ENCODE measurements at regions of chr1 and their contacts with region 1.

Region 1: GRCh38 chr1:110495926-110496600 is 22.9 kb downstream of the KCNA10 start:
- H3K4me3 ChIP-seq: no peak overlapping the region
- H3K27ac ChIP-seq: no peak overlapping the region
- H3K4me1 ChIP-seq: no peaks in the 10 kb centered on the region
- CTCF ChIP-seq: peak; percentile 87

Region 2: GRCh38 chr1:110053557-110054428 is 442.3 kb before region 1 on chr1:
- CTCF ChIA-PET with region 1: interaction called, 14 read pairs
- POLR2A ChIA-PET with region 1: no interaction called
- H3K4me3 ChIP-seq: no peak overlapping the region
- H3K27ac ChIP-seq: no peak overlapping the region
- H3K4me1 ChIP-seq: no peaks in the 10 kb centered on the region
- CTCF ChIP-seq: peak; percentile 92

Region 3: DNA sequence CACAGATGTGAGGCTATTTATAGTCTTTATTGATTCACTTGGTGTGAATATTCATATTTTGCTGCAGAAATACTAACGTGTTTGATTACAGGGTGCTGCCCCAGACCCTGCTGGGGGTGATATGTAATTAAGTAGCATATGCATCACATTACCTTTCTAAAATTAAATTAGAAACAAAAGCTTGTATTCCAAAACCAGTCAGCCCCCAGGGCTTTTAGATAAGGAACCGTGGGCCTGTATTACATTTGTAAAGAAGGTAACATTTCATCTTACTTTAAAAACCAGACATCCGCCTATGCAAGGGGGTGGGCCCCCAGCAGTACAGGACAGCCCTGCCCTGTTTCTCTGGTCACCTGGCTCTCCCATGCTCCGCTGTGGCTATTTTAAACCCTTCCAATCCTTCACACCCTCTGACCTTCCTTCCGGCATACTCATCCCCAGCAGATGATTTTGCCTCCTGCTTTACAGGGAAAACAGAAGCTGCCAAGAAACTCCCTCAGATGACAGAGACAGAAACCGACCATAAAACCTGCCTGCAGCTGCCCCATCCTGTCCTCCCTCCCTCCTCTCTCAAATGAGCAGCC is 307.9 kb before region 1 on chr1:
- CTCF ChIA-PET with region 1: interaction called, 10 read pairs
- POLR2A ChIA-PET with region 1: no interaction called
- H3K4me3 ChIP-seq: no peak overlapping the region
- H3K27ac ChIP-seq: peak overlapping the region; percentile 29; the same call in 1 of the 2 replicates
- H3K4me1 ChIP-seq: peaks cover 13% of the 10 kb centered on the region
- CTCF ChIP-seq: no peak

Region 4: DNA sequence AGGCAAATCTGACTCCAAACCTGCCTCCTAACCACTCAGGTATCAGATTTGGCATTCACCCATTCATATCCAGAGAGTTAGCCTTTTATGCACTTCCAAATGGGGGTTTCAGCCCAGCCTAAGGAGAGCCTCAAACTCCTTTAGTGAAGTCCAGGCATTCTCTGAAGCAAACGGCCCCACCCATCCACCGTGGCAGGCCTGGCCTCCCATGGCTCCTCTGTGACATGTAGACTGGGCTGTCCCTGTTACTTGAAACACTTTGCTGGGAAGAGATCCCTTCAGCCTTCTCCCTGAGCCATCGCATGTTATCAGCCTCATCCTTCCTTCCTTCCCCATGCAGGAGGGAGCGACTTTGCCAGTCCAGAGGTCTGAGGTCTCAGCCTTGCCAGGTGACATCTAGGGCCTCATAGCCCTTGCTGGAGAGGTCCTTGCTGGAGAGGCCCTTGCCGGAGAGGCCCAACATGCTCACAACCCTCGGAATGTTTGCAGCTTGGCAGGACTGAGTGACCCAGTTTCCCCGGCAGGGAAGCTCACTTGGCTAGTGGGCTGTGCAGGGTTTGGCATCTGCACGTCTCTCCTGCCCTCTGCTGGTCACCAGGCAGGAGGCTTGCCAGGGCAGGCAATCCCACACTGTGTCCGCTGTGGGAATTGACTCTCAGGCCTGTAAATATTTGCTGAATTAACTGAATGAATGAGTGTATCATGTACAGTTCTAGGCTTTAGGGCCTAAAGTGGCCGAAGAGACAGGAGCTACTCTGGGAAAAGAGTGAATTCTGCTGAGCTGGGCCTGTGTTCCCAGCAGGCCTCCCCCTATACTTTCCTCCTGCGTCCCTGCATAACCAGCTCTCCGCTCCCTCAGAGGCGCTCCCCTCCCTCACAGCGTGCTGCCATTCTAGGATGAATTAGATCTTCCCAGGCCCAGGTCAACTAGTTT is 183.6 kb before region 1 on chr1:
- CTCF ChIA-PET with region 1: interaction called, 36 read pairs
- POLR2A ChIA-PET with region 1: no interaction called
- H3K4me3 ChIP-seq: no peak overlapping the region
- H3K27ac ChIP-seq: no peak overlapping the region
- H3K4me1 ChIP-seq: no peaks in the 10 kb centered on the region
- CTCF ChIP-seq: peak; percentile 93

Region 5: GRCh38 chr1:110412576-110412975 is 83.5 kb before region 1 on chr1:
- CTCF ChIA-PET with region 1: interaction called, 50 read pairs
- POLR2A ChIA-PET with region 1: interaction called, 3 read pairs
- H3K4me3 ChIP-seq: no peak overlapping the region
- H3K27ac ChIP-seq: no peak overlapping the region
- H3K4me1 ChIP-seq: no peaks in the 10 kb centered on the region
- CTCF ChIP-seq: peak; percentile 66

Region 6: DNA sequence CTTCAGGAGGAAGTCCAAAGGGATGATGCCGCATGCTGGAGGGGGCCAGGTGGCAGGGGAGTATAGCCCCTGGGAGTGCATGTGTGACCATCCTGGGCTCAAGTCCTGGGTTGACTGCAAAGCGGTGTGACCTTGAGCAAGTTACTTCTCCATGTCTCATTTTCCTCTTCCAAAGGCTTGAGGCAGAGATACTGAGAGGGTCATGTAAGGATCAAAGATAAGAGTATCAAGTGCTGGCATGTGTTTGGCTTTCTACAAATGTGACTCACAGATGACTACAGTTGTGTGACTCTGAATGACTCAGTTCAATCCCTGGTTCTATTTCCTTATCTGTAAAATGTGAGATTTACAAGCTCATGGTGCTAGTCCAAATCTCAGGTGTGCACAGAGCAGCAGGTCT is 19.0 kb before region 1 on chr1:
- CTCF ChIA-PET with region 1: interaction called, 72 read pairs
- POLR2A ChIA-PET with region 1: no interaction called
- H3K4me3 ChIP-seq: no peak overlapping the region
- H3K27ac ChIP-seq: no peak overlapping the region
- H3K4me1 ChIP-seq: peaks cover 12% of the 10 kb centered on the region; the same call in 1 of the 2 replicates
- CTCF ChIP-seq: no peak

Region 7: DNA sequence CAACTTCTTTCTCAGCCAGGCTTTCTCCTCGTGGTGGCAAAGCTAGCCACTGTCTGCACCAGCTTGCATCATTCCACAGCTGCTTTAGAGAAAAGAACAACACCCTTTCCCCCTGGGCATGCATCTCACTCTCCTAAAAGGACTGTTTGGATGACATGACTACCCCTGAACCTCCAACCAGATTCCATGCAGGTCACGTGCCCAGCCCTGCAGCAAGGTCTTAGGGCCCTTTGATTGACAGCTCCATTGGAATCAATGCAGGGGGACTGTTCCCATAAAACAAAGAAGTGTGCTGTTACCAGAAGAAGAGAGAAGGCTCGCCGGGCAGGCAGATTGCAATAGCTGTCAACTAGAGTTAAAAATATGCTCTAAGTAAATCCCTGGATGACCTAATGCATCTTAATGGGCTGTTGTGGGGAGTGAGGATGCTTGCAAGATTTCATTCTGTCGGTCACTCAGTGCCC is 85.7 kb after region 1 on chr1:
- CTCF ChIA-PET with region 1: no interaction called
- POLR2A ChIA-PET with region 1: no interaction called
- H3K4me3 ChIP-seq: no peak overlapping the region
- H3K27ac ChIP-seq: no peak overlapping the region
- H3K4me1 ChIP-seq: no peaks in the 10 kb centered on the region
- CTCF ChIP-seq: no peak

Region 8: DNA sequence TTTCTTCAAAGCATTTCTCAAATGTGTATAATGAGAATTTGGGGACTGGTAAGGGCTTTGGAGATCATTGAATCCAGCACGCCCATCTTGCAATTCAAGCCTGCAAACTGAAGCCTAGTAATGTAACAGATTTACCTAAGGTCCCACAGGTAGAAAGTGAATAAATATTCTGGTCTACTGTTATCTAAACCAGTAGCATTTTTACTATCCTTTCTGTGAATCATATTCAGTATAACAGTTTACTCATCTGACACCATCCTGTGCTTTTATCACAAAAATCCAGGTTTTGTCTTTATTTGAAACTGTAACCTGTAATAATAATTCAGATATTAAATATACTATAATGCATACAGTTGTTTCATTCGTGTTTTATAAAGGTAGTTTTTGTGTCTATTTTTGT is 161.3 kb after region 1 on chr1:
- CTCF ChIA-PET with region 1: no interaction called
- POLR2A ChIA-PET with region 1: no interaction called
- H3K4me3 ChIP-seq: no peak overlapping the region
- H3K27ac ChIP-seq: no peak overlapping the region
- H3K4me1 ChIP-seq: no peaks in the 10 kb centered on the region
- CTCF ChIP-seq: no peak